ENCODE measurements at regions of chr1 and their contacts with region 1.

Region 1: GRCh38 chr1:43946236-43947060 is at the start of gene IPO13:
- DNase-seq: peak; percentile 98
- total RNA-seq, gene IPO13: 60.6 TPM

Region 2: DNA sequence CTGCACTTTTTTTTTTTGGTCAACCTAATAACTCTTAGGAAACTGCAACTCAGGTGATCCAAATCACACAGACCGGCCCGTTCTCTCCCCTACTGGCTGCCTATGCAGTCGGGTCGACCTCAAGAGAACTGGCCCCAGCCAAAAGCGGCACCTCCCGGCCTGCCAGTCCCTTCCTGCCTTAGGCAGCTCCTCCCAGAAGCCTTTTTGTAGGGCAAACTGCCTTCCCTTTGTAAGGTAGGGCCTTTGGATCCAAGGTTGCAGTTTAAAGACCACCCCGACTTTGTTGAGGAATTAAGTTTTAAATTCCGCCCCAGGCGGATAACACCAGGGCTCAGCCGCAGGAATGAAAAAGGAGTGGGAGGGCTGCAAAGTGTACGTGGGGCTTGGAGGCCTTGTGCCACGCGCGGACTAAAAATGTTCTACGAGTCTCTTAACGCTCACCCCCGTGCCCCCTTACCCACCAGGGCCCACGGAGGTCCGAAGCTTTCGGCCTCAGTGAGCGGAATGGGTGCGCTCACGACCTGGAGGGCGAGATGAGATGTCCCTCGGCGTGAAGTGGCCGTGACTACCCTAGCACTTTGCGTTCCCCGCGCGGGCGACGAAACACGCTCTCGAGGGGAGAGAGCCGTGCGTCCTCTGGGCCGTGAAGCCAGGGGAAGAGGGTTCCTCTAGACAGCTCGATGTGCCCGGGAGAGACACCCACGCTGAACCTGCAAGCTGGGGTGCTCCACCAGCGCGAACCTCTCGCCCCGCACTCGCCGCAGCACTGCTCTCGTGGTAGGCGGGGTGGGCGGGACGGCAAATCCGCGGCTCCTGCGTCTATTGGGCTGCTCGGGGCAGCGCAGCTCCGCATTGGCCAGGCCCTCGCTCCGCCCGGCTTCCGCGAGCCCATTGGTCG is 239.6 kb before region 1 on chr1:
- intact Hi-C with region 1: loop called (anchors 5 kb)
- DNase-seq: peak; percentile 96

Region 3: DNA sequence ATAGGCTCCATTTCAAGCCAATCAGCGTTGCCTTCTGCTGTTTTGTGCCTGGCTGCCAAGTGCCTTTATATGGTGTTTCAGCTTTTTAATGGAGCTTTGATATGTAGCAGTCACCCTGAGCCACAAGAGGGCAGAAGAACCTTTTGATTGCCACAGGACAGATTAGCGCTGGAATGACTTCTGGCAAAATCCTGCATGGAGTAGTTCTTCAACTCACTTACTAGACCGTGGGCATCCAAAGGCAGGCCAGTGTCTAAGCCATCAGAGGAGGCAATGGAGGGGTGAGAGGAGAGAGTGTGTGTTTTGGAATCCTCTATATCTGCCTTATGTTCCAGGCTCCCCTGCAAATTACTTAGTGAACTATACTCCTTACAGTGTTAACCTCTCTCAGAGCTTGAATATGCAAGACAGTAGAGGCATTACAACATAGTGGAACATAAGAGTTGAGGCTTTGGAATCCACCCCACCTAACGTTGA is 182.9 kb before region 1 on chr1:
- intact Hi-C with region 1: no loop called
- DNase-seq: no peak

Region 4: GRCh38 chr1:43974443-43975248 is 28.2 kb after region 1 on chr1 and contains the start of gene ATP6V0B:
- intact Hi-C with region 1: loop called (anchors 1 kb)
- DNase-seq: peak; percentile 99
- total RNA-seq, gene ATP6V0B: 81.6 TPM

Region 5: DNA sequence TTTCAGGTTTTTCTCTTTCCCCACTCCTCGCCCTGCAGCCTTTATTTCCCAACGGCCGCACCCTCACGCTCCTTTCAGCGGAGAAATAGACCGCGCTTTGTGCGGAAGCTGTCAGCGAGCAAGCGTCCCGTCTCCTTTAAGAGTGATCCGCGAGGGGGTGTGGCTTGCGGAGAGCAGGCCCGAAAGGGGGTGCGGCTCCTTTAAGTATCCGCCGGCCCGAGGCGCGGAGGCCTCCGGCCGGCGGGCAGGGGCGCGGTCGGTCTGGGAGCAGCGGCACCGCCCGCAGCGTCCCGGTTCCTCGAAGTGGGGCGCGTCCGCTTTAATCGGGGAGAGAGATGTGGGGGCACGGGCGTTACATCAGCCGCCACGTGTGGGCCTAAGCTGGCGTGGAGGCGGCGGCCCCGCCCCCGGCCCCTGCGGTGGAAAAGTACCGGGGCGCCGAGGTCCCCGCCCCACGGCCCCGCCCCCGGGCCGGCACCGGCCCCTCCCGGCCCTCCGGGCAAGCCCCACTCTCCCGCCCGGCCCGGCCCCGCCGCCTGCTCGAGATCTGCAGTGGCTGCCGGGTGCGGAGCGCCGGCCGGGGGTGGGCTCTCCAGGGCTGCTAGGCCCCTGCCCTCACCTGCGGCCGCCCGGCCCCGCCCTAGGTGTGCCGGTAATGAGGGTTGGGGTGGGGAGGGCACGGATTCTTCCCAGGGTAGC is 83.6 kb after region 1 on chr1:
- intact Hi-C with region 1: loop called (anchors 5 kb)
- DNase-seq: peak; percentile 95